ENCODE measurements at regions of chr2 and their contacts with region 1.

Region 1: GRCh38 chr2:54041135-54041534 is 70.3 kb upstream of the PSME4 start:
- DNase-seq: peak; percentile 4
- H3K4me3 Mint-ChIP-seq: no peak overlapping the region
- H3K27ac Mint-ChIP-seq: no peak overlapping the region
- H3K4me1 Mint-ChIP-seq: no peaks in the 10 kb centered on the region
- H3K27me3 Mint-ChIP-seq: peaks cover 2% of the 10 kb centered on the region

Region 2: GRCh38 chr2:53970724-53971602 is 70.2 kb before region 1 on chr2 and contains the start of gene PSME4:
- intact Hi-C with region 1: loop called (anchors 1 kb)
- DNase-seq: peak; percentile 91
- H3K4me3 Mint-ChIP-seq: peak within 1 kb of the TSS; percentile 99
- H3K27ac Mint-ChIP-seq: peak within 1 kb of the TSS; percentile 99
- H3K4me1 Mint-ChIP-seq: peaks cover 39% of the 10 kb centered on the region
- H3K27me3 Mint-ChIP-seq: no peaks in the 10 kb centered on the region
- total RNA-seq, gene PSME4: 59.3 and 59.7 TPM in 2 replicates

Region 3: DNA sequence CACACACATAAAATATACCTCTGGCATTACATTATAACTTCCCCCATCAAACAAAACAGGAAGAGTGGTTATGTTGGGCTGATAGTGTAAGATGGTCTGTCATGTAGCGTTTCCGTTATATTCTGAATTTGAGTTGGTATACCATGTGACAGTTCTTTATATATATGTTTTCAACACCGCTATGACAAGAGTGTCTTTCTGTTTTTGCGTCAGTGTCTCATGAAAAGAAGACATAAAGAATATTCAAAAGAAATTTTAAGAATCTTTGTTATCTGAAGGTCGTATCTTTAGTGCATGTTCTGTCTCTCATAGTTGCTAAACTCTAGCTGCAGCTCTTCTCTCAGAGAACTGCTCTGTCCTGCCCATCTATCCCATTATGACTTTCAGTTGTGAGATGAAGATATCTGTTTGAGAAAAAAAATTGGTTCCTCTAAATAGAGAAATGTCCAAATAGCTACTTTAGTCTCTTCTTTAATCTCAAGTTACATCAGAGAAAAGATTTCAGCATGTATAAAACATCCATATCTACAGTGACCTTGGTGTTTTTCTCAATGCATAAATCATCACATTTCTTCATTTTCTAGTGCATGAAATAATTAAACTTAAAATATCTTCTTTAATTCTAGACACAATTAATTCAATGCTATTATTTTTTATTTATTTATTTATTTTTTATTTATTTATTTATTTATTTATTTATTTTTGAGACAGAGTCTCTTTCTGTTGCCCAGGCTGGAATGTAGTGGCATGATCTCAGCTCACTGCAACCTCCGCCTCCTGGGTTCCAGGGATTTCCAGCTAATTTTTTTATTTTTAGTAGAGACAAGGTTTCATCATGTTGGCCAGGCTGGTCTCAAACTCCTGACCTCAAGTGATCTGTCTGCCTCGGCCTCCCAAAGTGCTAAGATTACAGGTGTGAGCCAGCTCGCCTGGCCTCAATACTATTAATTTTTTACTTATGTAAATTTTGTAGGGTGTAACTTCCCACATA is 46.0 kb before region 1 on chr2:
- intact Hi-C with region 1: loop called (anchors 1 kb)
- DNase-seq: no peak
- H3K4me3 Mint-ChIP-seq: peak overlapping the region; percentile 43
- H3K27ac Mint-ChIP-seq: peak overlapping the region; percentile 56
- H3K4me1 Mint-ChIP-seq: peaks cover 18% of the 10 kb centered on the region
- H3K27me3 Mint-ChIP-seq: no peaks in the 10 kb centered on the region

Region 4: GRCh38 chr2:54052825-54053718 is 11.9 kb after region 1 on chr2:
- intact Hi-C with region 1: loop called (anchors 2 kb)
- DNase-seq: no peak
- H3K4me3 Mint-ChIP-seq: peak overlapping the region; percentile 40
- H3K27ac Mint-ChIP-seq: peak overlapping the region; percentile 64
- H3K4me1 Mint-ChIP-seq: peaks cover 20% of the 10 kb centered on the region
- H3K27me3 Mint-ChIP-seq: no peaks in the 10 kb centered on the region

Region 5: GRCh38 chr2:54073797-54074196 is 32.7 kb after region 1 on chr2:
- intact Hi-C with region 1: loop called (anchors 2 kb)
- DNase-seq: no peak
- H3K4me3 Mint-ChIP-seq: no peak overlapping the region
- H3K27ac Mint-ChIP-seq: peak overlapping the region; percentile 55
- H3K4me1 Mint-ChIP-seq: peaks cover 14% of the 10 kb centered on the region
- H3K27me3 Mint-ChIP-seq: no peaks in the 10 kb centered on the region

Region 6: GRCh38 chr2:54085069-54085468 is 43.9 kb after region 1 on chr2:
- intact Hi-C with region 1: loop called (anchors 1 kb)
- DNase-seq: no peak
- H3K4me3 Mint-ChIP-seq: no peak overlapping the region
- H3K27ac Mint-ChIP-seq: no peak overlapping the region
- H3K4me1 Mint-ChIP-seq: peaks cover 5% of the 10 kb centered on the region
- H3K27me3 Mint-ChIP-seq: no peaks in the 10 kb centered on the region

Region 7: GRCh38 chr2:54330162-54330925 is 289.2 kb after region 1 on chr2:
- intact Hi-C with region 1: loop called (anchors 5 kb)
- DNase-seq: peak; percentile 86
- H3K4me3 Mint-ChIP-seq: peak overlapping the region; percentile 81
- H3K27ac Mint-ChIP-seq: peak overlapping the region; percentile 69
- H3K4me1 Mint-ChIP-seq: peaks cover 17% of the 10 kb centered on the region
- H3K27me3 Mint-ChIP-seq: peaks cover 19% of the 10 kb centered on the region

Region 8: DNA sequence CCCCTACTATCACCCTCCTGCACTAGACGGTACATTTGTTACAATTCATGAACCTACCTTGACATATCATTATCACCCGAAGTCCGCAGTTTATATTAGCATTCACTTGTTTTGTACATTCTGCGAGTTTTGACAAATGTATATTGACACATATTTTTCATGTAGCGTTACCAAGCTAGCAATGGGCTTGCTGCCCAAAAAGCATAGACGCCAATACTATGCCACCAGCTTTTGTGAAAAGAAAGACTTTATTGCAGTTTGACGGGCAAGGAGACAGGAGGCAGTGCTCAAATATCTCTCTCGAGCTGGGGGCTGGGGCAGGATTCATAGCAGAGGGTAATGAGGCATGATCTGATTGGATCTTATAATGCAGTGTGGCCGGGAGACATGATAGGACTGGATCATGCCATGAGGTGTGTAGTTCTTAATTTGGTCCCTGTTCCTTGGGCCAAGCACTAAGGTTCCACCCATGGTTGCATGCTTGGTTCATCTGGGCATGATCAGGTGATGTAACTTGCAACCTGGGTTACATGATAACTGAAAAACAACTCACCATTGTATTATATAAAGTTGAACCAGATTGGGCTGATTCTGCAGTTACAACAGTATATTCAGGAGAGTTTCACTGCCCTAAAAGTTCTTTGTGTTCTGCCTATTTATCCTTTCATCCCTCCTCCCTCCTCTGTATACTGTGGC is 846.9 kb after region 1 on chr2:
- intact Hi-C with region 1: no loop called
- DNase-seq: no peak
- H3K4me3 Mint-ChIP-seq: no peak overlapping the region
- H3K27ac Mint-ChIP-seq: no peak overlapping the region
- H3K4me1 Mint-ChIP-seq: no peaks in the 10 kb centered on the region
- H3K27me3 Mint-ChIP-seq: peaks cover 3% of the 10 kb centered on the region

Measured in activated T-helper 1 cell treated with anti-CD3 and anti-CD28 coated beads, Interleukin-12 subunit alpha, Interleukin-12 subunit beta, Interleukin-2, Interleukin-4 antibody, amounts not matched to agents 30 ng/mL and 10 ng/mL and 1 ng/mL, durations not matched to agents 14 hours and 24 hours and 36 hours (primary cell).